Left ventricle myocardium superior (tissue), 1 donor: ENCODE measurements at regions of chr12 and their contacts with region 1.

Region 1: DNA sequence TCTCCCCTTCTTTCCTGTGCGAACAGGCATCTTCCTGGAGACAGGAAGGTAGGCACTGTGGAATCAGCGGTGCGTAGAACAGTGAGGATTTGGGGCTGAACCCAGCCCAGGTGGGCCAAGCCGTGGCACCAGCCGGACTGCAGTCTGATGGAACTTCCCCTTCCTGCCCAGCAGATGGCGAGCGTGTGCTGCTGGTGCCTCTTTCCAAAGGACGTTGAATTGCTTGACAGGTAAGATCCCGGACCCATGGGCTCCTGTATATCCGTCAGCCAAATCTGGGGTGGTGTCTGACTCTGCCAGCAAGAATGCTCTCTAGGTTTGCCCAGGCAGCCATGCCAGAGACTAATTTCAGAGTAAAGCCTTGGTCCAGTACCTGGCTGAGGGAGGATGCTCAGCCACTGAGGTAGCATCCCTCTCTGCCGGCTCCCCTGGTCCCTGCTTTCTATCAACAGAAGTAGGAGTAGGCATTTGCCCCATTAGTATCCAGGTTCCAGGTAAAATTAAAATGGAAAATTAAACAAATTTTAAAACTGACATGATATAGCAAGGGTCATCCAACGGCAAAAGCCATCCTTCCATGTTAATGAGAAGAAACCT is 21.1 kb upstream of the KCNA5 start:
- DNase-seq: peak; percentile 62
- ATAC-seq: peak; percentile 78

Region 2: GRCh38 chr12:5034603-5035002 is 12.0 kb after region 1 on chr12:
- intact Hi-C with region 1: no loop called
- DNase-seq: no peak
- ATAC-seq: peak; percentile 46

Region 3: GRCh38 chr12:5076761-5077160 is 54.2 kb after region 1 on chr12:
- intact Hi-C with region 1: loop called (anchors 2 kb)
- DNase-seq: peak; percentile 63
- ATAC-seq: peak; percentile 72

Region 4: DNA sequence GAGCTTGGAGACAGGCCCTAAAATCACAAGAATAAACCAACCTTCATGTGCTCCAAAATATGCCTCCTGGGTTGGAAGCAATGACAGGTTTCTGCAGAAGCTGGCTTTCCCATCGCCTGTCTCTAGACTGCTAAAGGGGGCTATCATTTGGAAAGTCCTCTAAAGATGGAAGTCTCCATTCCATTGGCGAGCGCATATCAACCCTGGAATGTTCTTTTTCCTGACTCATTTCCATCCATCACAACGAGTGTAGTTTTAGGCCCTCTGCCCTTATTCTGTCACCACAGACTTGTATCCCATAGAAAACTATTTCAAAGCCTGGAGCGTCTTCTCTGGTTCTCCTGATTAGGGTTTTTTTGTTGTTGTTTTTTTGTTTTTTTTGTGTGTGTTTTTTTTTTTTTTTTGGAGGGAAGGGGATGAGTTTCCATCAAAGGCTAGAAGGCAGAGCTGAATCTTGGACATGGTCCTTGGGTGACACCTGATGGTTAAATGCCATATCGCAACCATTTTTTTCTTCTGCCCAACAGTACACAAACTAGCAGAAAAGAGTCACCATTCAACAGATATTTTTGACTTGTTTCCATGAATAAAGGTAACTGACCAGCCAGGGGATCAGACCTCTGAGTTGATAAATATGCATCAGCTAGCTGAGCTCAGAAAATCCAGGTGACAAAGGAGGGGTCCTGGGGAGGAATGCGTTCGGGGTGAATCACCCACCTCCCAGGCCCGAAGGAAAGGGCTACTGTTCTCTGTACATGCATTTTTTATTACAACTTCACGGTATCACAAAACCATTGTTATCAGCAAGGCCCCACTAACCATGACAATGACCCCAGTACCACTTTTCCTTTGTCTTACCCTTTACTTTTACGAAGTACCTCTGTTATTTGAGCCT is 61.6 kb after region 1 on chr12:
- intact Hi-C with region 1: loop called (anchors 2 kb)
- DNase-seq: no peak
- ATAC-seq: peak; percentile 59